ENCODE measurements at regions of chr12 and their contacts with region 1.

Region 1: DNA sequence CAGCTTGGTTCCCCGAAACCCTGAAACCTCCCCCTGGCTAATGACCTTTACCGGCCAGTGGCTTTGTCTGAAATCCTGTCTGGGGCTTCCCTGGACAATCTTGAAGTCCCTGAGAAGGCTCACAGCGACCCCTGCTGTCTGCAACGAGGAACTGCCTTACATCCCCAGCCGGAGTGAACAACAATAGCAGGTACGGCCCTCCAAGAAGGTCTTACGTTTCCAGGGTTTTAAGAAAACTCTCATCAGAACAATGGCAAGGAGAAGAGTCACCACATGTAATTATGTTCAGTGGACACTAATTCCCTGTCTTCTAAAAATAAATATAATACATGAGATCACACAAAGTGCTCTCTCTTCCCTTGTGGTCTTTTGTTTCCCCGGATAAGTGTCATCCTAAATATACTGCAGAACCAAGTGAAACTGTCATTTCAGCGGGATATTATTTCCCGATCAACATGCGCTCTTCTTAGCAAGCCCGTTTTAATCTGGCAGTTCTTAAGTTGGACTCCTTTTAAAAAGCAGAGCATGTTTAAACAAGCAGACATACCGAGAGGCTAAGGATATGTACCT is 53.3 kb downstream of the RBM19 start:
- DNase-seq: peak in 1 of 2 donors; percentile 28
- ATAC-seq: peak; percentile 45 to 62
- H3K4me3 ChIP-seq: no peak overlapping the region
- H3K27ac ChIP-seq: no peak overlapping the region
- H3K4me1 ChIP-seq: no peaks in the 10 kb centered on the region
- H3K27me3 ChIP-seq: no peaks in the 10 kb centered on the region
- CTCF ChIP-seq: peak; percentile 55 to 81 (median 69)
- POLR2A ChIP-seq: no peak

Region 2: DNA sequence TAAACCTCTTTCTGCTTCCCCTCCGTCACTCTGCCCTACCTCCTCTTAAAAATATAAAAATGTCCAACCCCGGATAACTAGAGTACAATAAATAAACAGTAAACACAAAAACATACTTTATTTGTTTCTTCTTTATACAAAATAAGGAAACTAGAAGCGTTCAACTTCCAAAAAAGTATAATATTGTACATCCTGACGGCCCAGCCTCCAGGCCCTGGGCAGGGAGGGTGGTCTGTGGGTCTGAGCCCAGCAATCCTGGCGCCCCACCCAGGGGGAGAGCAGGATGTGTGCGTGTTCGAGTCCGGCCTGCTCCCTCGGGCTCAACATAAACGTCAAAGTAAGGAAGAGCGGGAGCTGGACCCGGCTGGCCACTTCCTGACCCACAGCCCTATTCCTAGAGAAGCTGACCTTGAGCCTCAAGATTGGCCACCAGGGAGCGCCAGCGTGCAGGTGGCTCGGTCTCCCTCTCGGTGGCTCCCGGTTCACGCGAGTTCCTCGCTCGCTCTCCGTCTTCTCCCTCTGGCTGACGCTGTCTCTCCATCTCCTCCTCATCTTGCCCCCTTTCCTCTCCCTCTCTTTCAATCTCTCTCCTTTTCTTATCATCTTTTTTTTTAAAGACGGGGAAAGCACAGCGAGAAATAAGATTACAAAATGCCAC is 450.6 kb before region 1 on chr12:
- in situ Hi-C with region 1: loop called (anchors 25 kb)
- intact Hi-C with region 1: loop called (anchors 2 kb)
- DNase-seq: peak; percentile 22 to 55
- ATAC-seq: peak; percentile 56 to 73
- H3K4me3 ChIP-seq: peak overlapping the region in 3 of 4 donors; percentile 24 to 44 (median 28)
- H3K27ac ChIP-seq: no peak overlapping the region
- H3K4me1 ChIP-seq: peaks cover 19 to 26% of the 10 kb centered on the region in 2 donors
- H3K27me3 ChIP-seq: peaks cover 69 to 72% (median 70%) of the 10 kb centered on the region in 3 donors
- CTCF ChIP-seq: peak in 3 of 5 experiments; percentile 50 to 71 (median 65)
- POLR2A ChIP-seq: no peak

Measured in gastrocnemius medialis (tissue), 4 donors.